CD4-positive, alpha-beta memory T cell (primary cell): ENCODE measurements at regions of chr15 and their contacts with region 1.

Region 1: GRCh38 chr15:49046220-49047102 is at the start of gene SECISBP2L:
- DNase-seq: peak; percentile 89 to 93 (median 91)
- H3K4me3 ChIP-seq: peak within 1 kb of the TSS; percentile 80 to 88
- H3K4me3 Mint-ChIP-seq: peak within 1 kb of the TSS; percentile 95 to 97 (median 96)
- H3K27ac ChIP-seq: peak within 1 kb of the TSS; percentile 62
- H3K27ac Mint-ChIP-seq: peak within 1 kb of the TSS; percentile 92 to 97 (median 92)
- H3K4me1 ChIP-seq: peaks cover 35% of the 10 kb centered on the region
- H3K4me1 Mint-ChIP-seq: peaks cover 19 to 44% (median 29%) of the 10 kb centered on the region in 4 donors
- H3K27me3 ChIP-seq: no peaks in the 10 kb centered on the region
- H3K27me3 Mint-ChIP-seq: no peaks in the 10 kb centered on the region
- total RNA-seq, gene SECISBP2L: 64.3 to 72.9 TPM

Region 2: GRCh38 chr15:48810414-48811317 is 235.8 kb before region 1 on chr15 and contains the start of gene CEP152:
- CTCF ChIA-PET with region 1: no interaction called
- POLR2A ChIA-PET with region 1: interaction called, 3 read pairs
- intact Hi-C with region 1: loop called (anchors 1 kb)
- DNase-seq: peak; percentile 97 to 99 (median 98)
- H3K4me3 ChIP-seq: peak within 1 kb of the TSS; percentile 91 to 99
- H3K4me3 Mint-ChIP-seq: peak within 1 kb of the TSS; percentile 80 to 95 (median 94)
- H3K27ac ChIP-seq: peak within 1 kb of the TSS; percentile 67
- H3K27ac Mint-ChIP-seq: peak within 1 kb of the TSS; percentile 82 to 95 (median 88)
- H3K4me1 ChIP-seq: peaks cover 16% of the 10 kb centered on the region
- H3K4me1 Mint-ChIP-seq: peaks cover 19 to 38% (median 24%) of the 10 kb centered on the region in 4 donors
- H3K27me3 ChIP-seq: no peaks in the 10 kb centered on the region
- H3K27me3 Mint-ChIP-seq: peaks cover 0 to 5% of the 10 kb centered on the region in 2 donors
- total RNA-seq, gene CEP152: 14.4 to 15.3 TPM

Region 3: GRCh38 chr15:48975472-48976419 is 70.7 kb before region 1 on chr15:
- CTCF ChIA-PET with region 1: interaction called, 5 read pairs
- POLR2A ChIA-PET with region 1: no interaction called
- intact Hi-C with region 1: loop called (anchors 2 kb)
- DNase-seq: peak; percentile 60 to 74 (median 69)
- H3K4me3 ChIP-seq: peak overlapping the region in 1 of 2 donors; percentile 28
- H3K4me3 Mint-ChIP-seq: peak overlapping the region; percentile 40 to 76 (median 68)
- H3K27ac ChIP-seq: no peak overlapping the region
- H3K27ac Mint-ChIP-seq: no peak overlapping the region
- H3K4me1 ChIP-seq: peaks cover 9% of the 10 kb centered on the region
- H3K4me1 Mint-ChIP-seq: peaks cover 0 to 9% (median 3%) of the 10 kb centered on the region in 4 donors
- H3K27me3 ChIP-seq: no peaks in the 10 kb centered on the region
- H3K27me3 Mint-ChIP-seq: peaks cover 9 to 26% of the 10 kb centered on the region in 2 donors

Region 4: DNA sequence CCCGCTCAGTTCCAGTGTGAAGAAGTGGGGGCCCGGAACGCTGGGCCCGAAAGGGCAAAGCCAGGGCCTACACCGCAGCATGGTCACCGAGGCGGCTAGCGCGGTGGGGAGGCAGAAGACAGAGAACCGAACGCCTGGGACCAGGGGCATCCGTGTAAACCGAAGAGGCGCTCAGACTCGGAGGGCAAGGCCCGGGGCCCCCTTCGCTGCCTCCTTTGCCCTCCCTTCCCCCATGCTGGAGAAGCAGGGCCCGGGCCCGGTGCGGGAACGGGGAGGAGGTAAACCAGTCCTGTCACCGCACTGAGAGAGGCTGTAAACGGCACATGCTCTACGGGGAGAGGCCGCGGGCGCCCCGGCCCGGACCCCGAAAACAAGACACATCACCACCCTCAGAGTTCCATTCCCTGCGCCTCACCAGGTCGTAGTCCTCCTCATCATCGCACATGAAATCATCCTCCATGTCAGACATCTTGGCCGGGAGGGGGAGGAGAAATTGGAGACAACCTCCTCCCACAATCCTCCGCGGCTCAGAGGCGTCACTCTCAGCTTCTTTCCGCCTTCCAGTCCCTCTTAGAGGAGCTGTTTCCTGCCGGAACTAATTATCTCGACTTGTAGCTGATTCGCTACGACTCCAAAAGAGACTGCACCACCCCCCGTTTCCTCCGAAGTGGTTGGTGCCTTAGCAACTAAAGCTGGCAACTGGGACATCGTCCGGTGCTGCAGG is 108.8 kb after region 1 on chr15 and contains the start of gene COPS2:
- CTCF ChIA-PET with region 1: no interaction called
- POLR2A ChIA-PET with region 1: interaction called, 23 read pairs
- intact Hi-C with region 1: loop called (anchors 1 kb)
- DNase-seq: peak; percentile 93 to 97 (median 95)
- H3K4me3 ChIP-seq: peak within 1 kb of the TSS; percentile 74 to 88
- H3K4me3 Mint-ChIP-seq: peak within 1 kb of the TSS; percentile 97 to 100 (median 100)
- H3K27ac ChIP-seq: peak within 1 kb of the TSS; percentile 94
- H3K27ac Mint-ChIP-seq: peak within 1 kb of the TSS; percentile 97 to 100 (median 99)
- H3K4me1 ChIP-seq: peaks cover 52% of the 10 kb centered on the region
- H3K4me1 Mint-ChIP-seq: peaks cover 33 to 61% (median 49%) of the 10 kb centered on the region in 4 donors
- H3K27me3 ChIP-seq: no peaks in the 10 kb centered on the region
- H3K27me3 Mint-ChIP-seq: no peaks in the 10 kb centered on the region
- total RNA-seq, gene COPS2: 55.5 to 56.9 TPM

Region 5: DNA sequence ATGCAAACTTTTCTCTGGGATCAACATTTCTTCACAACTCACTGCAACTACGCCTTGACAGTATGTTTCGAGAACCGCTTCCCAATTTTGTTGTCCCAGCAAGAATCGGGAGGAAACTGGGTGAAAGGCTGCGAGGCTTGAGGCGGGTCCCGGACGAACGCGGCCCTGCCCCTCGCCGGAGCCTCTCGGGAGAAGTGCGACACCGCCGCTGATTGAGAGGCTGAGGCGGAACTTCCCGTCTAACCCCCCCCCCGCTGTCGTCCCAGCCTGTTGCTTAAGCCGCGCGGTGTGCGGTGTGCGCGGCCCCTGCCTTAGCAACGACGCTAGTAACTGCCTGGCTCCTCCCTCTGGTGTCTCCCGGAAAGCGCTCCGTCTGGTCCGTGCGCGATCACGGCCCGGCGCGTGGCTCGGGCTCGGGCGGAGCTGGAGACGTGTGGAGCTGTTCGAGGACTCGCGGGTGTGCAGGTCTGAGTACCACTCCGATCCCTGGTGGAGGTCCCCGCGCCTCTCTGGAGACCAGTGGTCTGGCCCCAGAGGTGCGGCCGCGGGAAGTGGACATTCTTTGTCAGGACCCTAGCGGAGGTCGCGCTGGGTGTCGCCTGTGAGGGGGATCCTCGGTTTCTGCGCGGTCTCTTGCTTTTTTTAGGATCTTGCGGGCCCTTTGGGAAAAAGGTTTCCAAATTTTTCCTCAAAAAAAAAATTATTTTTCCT is 574.4 kb after region 1 on chr15 and contains the starts of genes DTWD1 and FAM227B:
- CTCF ChIA-PET with region 1: no interaction called
- POLR2A ChIA-PET with region 1: interaction called, 10 read pairs
- intact Hi-C with region 1: loop called (anchors 2 kb)
- DNase-seq: peak; percentile 92 to 96 (median 93)
- H3K4me3 ChIP-seq: peak within 1 kb of the TSS; percentile 80 to 92
- H3K4me3 Mint-ChIP-seq: peak within 1 kb of the TSS; percentile 95 to 99 (median 98)
- H3K27ac ChIP-seq: peak within 1 kb of the TSS; percentile 71
- H3K27ac Mint-ChIP-seq: peak within 1 kb of the TSS; percentile 98 to 99 (median 99)
- H3K4me1 ChIP-seq: peaks cover 22% of the 10 kb centered on the region
- H3K4me1 Mint-ChIP-seq: peaks cover 25 to 51% (median 37%) of the 10 kb centered on the region in 4 donors
- H3K27me3 ChIP-seq: no peaks in the 10 kb centered on the region
- H3K27me3 Mint-ChIP-seq: no peaks in the 10 kb centered on the region
- total RNA-seq, gene DTWD1: 28.7 to 29.9 TPM
- total RNA-seq, gene FAM227B: 11.5 to 13.6 TPM